ENCODE measurements at regions of chr6 and their contacts with region 1.

Region 1: DNA sequence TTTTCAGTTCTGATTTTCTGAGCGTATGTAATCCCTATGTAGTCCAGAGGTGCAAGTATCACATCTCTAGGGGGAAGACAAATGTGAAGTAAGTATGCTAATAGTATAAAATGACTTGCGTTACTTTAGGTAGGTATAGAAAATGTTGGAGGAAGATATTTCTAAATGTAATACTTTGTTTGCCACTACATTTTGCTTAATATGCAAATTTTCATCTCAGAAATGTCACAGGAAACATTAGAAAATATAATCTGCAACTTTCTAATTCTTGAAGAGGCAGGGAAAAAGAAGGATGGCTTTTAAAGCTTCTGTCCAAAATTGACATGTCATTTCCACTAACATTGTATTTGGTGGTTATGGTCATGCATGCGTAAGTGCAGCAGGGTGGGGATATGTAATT is 85.6 kb downstream of the CD2AP start:
- DNase-seq: no peak
- ATAC-seq: no peak
- H3K4me3 ChIP-seq: no peak overlapping the region
- H3K4me3 Mint-ChIP-seq: no peak overlapping the region
- H3K27ac ChIP-seq: no peak overlapping the region
- H3K27ac Mint-ChIP-seq: no peak overlapping the region
- H3K4me1 ChIP-seq: no peaks in the 10 kb centered on the region
- H3K4me1 Mint-ChIP-seq: peaks cover 0 to 9% (median 5%) of the 10 kb centered on the region in 3 donors
- H3K27me3 ChIP-seq: no peaks in the 10 kb centered on the region
- H3K27me3 Mint-ChIP-seq: no peaks in the 10 kb centered on the region

Region 2: DNA sequence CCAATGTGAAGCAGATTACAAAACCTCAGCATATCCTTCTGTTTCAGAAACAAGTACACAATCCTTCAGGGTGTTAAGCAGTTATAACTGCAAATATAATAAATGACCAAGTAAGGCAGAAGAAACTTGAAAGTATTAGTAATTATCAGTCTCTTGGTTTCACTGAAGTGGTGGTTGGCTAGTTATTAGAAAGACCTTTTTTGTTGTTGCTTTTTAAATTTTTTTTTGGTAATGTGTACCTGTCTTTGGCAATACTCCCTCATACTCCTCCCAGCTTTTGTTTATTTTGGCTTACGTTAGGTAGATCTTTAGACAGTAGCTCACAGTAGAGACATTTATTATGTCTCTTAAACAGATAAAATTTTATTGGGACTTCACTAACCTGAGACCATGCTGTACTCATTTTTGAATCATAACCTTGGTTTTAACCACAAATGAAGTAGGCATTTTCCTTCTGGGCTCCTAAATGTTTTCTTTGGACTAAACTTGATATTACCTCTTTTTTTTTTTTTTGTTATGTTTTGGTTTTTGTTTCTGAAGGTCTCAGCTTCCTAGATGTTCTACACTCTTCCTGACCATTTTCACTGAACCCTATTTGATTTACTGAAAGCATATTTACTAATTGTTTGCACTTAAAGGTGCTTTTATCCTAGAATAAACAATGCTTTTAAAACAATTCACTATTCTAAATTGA is 79.2 kb before region 1 on chr6:
- CTCF ChIA-PET with region 1: no interaction called
- POLR2A ChIA-PET with region 1: interaction called in 1 of 2 experiments, 12 read pairs
- DNase-seq: no peak
- ATAC-seq: no peak
- H3K4me3 ChIP-seq: no peak overlapping the region
- H3K4me3 Mint-ChIP-seq: peak overlapping the region in 1 of 3 donors; percentile 24
- H3K27ac ChIP-seq: no peak overlapping the region
- H3K27ac Mint-ChIP-seq: peak overlapping the region in 1 of 2 donors; percentile 36
- H3K4me1 ChIP-seq: peaks cover 6 to 27% of the 10 kb centered on the region in 2 experiments
- H3K4me1 Mint-ChIP-seq: peaks cover 65 to 72% (median 67%) of the 10 kb centered on the region in 3 donors
- H3K27me3 ChIP-seq: no peaks in the 10 kb centered on the region
- H3K27me3 Mint-ChIP-seq: no peaks in the 10 kb centered on the region